ENCODE measurements at regions of chr10 and their contacts with region 1.

Region 1: GRCh38 chr10:69408318-69409175 is 8.2 kb downstream of the TACR2 start:
- DNase-seq: peak; percentile 89 to 91 (median 89)
- H3K4me3 ChIP-seq: peak overlapping the region in 1 of 2 donors; percentile 25
- H3K4me3 Mint-ChIP-seq: peak overlapping the region in 7 of 8 donors; percentile 64 to 82 (median 70)
- H3K27ac ChIP-seq: peak overlapping the region; percentile 61
- H3K27ac Mint-ChIP-seq: peak overlapping the region; percentile 70 to 96 (median 94)
- H3K4me1 ChIP-seq: peaks cover 17% of the 10 kb centered on the region
- H3K4me1 Mint-ChIP-seq: peaks cover 8 to 39% (median 18%) of the 10 kb centered on the region in 4 donors
- H3K27me3 ChIP-seq: no peaks in the 10 kb centered on the region
- H3K27me3 Mint-ChIP-seq: no peaks in the 10 kb centered on the region

Region 2: DNA sequence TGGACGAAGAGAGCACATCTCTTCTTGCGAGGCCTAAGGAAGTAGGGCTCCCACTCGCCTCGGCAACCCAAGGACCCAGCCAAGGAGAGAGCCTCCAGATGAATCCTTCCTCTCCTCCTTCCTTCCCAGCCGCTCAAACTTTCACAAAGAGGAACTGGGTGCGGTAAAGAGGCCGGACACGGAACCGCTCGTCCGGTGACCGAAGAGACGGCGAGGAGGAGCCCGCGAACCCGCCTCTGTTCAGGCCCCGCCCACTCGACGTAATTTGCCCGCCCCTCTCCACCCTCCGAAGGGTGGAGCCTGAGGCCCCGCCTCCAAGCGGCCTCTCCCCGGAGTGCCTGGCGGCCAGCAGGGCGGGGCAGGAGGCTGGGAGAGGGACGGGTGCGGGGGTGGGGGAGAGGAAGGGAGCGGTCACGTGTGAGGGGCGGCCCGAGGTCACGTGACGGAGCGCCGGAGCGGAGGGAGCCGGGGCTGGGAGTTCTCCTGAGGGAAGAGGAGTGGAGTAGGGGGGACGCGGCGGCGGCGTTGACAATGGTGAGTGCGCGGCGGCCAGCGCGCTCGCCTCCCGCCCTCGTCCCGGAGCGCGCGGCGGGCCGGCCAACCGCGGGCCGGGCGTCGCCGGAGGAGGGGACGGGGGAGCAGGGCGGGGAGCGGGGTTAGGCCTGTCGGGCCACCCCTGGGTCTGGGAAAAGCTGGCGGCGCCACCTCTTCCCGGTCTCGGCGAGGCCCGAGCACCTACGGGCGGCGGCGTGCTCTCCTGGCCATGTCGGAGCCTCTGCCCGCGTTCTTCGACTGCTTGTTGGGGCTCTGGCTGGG is 284.6 kb before region 1 on chr10 and contains the start of gene VPS26A:
- CTCF ChIA-PET with region 1: no interaction called
- POLR2A ChIA-PET with region 1: no interaction called
- intact Hi-C with region 1: loop called (anchors 5 kb)
- DNase-seq: peak; percentile 98 to 100 (median 98)
- H3K4me3 ChIP-seq: peak within 1 kb of the TSS; percentile 47 to 81
- H3K4me3 Mint-ChIP-seq: peak within 1 kb of the TSS; percentile 92 to 96 (median 94)
- H3K27ac ChIP-seq: peak within 1 kb of the TSS; percentile 96
- H3K27ac Mint-ChIP-seq: peak within 1 kb of the TSS; percentile 96 to 99 (median 98)
- H3K4me1 ChIP-seq: peaks cover 37% of the 10 kb centered on the region
- H3K4me1 Mint-ChIP-seq: peaks cover 13 to 29% (median 21%) of the 10 kb centered on the region in 4 donors
- H3K27me3 ChIP-seq: no peaks in the 10 kb centered on the region
- H3K27me3 Mint-ChIP-seq: no peaks in the 10 kb centered on the region
- total RNA-seq, gene VPS26A: 31.7 to 35.9 TPM

Region 3: GRCh38 chr10:69237528-69238159 is 170.9 kb before region 1 on chr10:
- CTCF ChIA-PET with region 1: interaction called, 15 read pairs
- POLR2A ChIA-PET with region 1: interaction called, 4 read pairs
- intact Hi-C with region 1: loop called (anchors 1 kb)
- DNase-seq: peak; percentile 78 to 82 (median 79)
- H3K4me3 ChIP-seq: no peak overlapping the region
- H3K4me3 Mint-ChIP-seq: peak overlapping the region in 2 of 8 donors; percentile 7 to 48
- H3K27ac ChIP-seq: no peak overlapping the region
- H3K27ac Mint-ChIP-seq: peak overlapping the region in 3 of 7 donors; percentile 11 to 63 (median 17)
- H3K4me1 ChIP-seq: peaks cover 17% of the 10 kb centered on the region
- H3K4me1 Mint-ChIP-seq: peaks cover 14 to 27% (median 17%) of the 10 kb centered on the region in 4 donors
- H3K27me3 ChIP-seq: no peaks in the 10 kb centered on the region
- H3K27me3 Mint-ChIP-seq: no peaks in the 10 kb centered on the region

Region 4: GRCh38 chr10:69337296-69338132 is 71.0 kb before region 1 on chr10:
- CTCF ChIA-PET with region 1: no interaction called
- POLR2A ChIA-PET with region 1: no interaction called
- intact Hi-C with region 1: no loop called
- DNase-seq: no peak
- H3K4me3 ChIP-seq: no peak overlapping the region
- H3K4me3 Mint-ChIP-seq: peak overlapping the region in 5 of 8 donors; percentile 11 to 57 (median 24)
- H3K27ac ChIP-seq: no peak overlapping the region
- H3K27ac Mint-ChIP-seq: peak overlapping the region in 6 of 7 donors; percentile 42 to 70 (median 58)
- H3K4me1 ChIP-seq: peaks cover 78% of the 10 kb centered on the region
- H3K4me1 Mint-ChIP-seq: peaks cover 47 to 88% (median 71%) of the 10 kb centered on the region in 4 donors
- H3K27me3 ChIP-seq: no peaks in the 10 kb centered on the region
- H3K27me3 Mint-ChIP-seq: no peaks in the 10 kb centered on the region

Region 5: GRCh38 chr10:69377933-69378332 is 30.6 kb before region 1 on chr10:
- CTCF ChIA-PET with region 1: no interaction called
- POLR2A ChIA-PET with region 1: no interaction called
- intact Hi-C with region 1: no loop called
- DNase-seq: no peak
- H3K4me3 ChIP-seq: no peak overlapping the region
- H3K4me3 Mint-ChIP-seq: no peak overlapping the region
- H3K27ac ChIP-seq: no peak overlapping the region
- H3K27ac Mint-ChIP-seq: peak overlapping the region in 6 of 7 donors; percentile 9 to 75 (median 52)
- H3K4me1 ChIP-seq: no peaks in the 10 kb centered on the region
- H3K4me1 Mint-ChIP-seq: peaks cover 0 to 4% (median 1%) of the 10 kb centered on the region in 4 donors
- H3K27me3 ChIP-seq: no peaks in the 10 kb centered on the region
- H3K27me3 Mint-ChIP-seq: no peaks in the 10 kb centered on the region

Region 6: GRCh38 chr10:69397972-69398371 is 10.6 kb before region 1 on chr10:
- CTCF ChIA-PET with region 1: interaction called, 23 read pairs
- POLR2A ChIA-PET with region 1: interaction called, 3 read pairs
- intact Hi-C with region 1: no loop called
- DNase-seq: no peak
- H3K4me3 ChIP-seq: no peak overlapping the region
- H3K4me3 Mint-ChIP-seq: no peak overlapping the region
- H3K27ac ChIP-seq: no peak overlapping the region
- H3K27ac Mint-ChIP-seq: no peak overlapping the region
- H3K4me1 ChIP-seq: no peaks in the 10 kb centered on the region
- H3K4me1 Mint-ChIP-seq: peaks cover 0 to 2% (median 0%) of the 10 kb centered on the region in 4 donors
- H3K27me3 ChIP-seq: no peaks in the 10 kb centered on the region
- H3K27me3 Mint-ChIP-seq: no peaks in the 10 kb centered on the region

Region 7: DNA sequence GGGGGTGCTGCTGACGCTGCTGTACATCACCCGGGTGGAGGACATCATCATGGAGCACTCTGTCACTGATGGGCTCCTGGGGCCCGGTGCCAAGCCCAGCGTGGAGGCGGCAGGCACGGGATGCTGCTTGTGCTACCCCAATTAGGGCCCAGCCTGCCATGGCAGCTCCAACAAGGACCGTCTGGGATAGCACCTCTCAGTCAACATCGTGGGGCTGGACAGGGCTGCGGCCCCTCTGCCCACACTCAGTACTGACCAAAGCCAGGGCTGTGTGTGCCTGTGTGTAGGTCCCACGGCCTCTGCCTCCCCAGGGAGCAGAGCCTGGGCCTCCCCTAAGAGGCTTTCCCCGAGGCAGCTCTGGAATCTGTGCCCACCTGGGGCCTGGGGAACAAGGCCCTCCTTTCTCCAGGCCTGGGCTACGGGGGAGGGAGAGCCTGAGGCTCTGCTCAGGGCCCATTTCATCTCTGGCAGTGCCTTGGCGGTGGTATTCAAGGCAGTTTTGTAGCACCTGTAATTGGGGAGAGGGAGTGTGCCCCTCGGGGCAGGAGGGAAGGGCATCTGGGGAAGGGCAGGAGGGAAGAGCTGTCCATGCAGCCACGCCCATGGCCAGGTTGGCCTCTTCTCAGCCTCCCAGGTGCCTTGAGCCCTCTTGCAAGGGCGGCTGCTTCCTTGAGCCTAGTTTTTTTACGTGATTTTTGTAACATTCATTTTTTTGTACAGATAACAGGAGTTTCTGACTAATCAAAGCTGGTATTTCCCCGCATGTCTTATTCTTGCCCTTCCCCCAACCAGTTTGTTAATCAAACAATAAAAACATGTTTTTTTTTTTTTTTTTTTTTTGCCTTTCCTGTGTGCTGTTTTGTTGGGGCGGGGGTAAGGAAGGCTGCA is 98.5 kb after region 1 on chr10:
- CTCF ChIA-PET with region 1: interaction called, 80 read pairs
- POLR2A ChIA-PET with region 1: interaction called, 33 read pairs
- intact Hi-C with region 1: loop called (anchors 1 kb)
- DNase-seq: peak in 1 of 5 donors; percentile 62
- H3K4me3 ChIP-seq: peak overlapping the region in 1 of 2 donors; percentile 51
- H3K4me3 Mint-ChIP-seq: peak overlapping the region; percentile 68 to 86 (median 78)
- H3K27ac ChIP-seq: peak overlapping the region; percentile 39
- H3K27ac Mint-ChIP-seq: peak overlapping the region; percentile 84 to 98 (median 92)
- H3K4me1 ChIP-seq: peaks cover 20% of the 10 kb centered on the region
- H3K4me1 Mint-ChIP-seq: peaks cover 9 to 20% (median 14%) of the 10 kb centered on the region in 4 donors
- H3K27me3 ChIP-seq: no peaks in the 10 kb centered on the region
- H3K27me3 Mint-ChIP-seq: no peaks in the 10 kb centered on the region

Region 8: GRCh38 chr10:69639291-69640195 is 231.0 kb after region 1 on chr10:
- CTCF ChIA-PET with region 1: interaction called, 20 read pairs
- POLR2A ChIA-PET with region 1: no interaction called
- intact Hi-C with region 1: loop called (anchors 1 kb)
- DNase-seq: peak; percentile 67 to 73 (median 69)
- H3K4me3 ChIP-seq: no peak overlapping the region
- H3K4me3 Mint-ChIP-seq: no peak overlapping the region
- H3K27ac ChIP-seq: no peak overlapping the region
- H3K27ac Mint-ChIP-seq: peak overlapping the region in 1 of 7 donors; percentile 27
- H3K4me1 ChIP-seq: no peaks in the 10 kb centered on the region
- H3K4me1 Mint-ChIP-seq: peaks cover 0 to 4% (median 3%) of the 10 kb centered on the region in 4 donors
- H3K27me3 ChIP-seq: no peaks in the 10 kb centered on the region
- H3K27me3 Mint-ChIP-seq: peaks cover 0 to 2% of the 10 kb centered on the region in 2 donors

Region 9: DNA sequence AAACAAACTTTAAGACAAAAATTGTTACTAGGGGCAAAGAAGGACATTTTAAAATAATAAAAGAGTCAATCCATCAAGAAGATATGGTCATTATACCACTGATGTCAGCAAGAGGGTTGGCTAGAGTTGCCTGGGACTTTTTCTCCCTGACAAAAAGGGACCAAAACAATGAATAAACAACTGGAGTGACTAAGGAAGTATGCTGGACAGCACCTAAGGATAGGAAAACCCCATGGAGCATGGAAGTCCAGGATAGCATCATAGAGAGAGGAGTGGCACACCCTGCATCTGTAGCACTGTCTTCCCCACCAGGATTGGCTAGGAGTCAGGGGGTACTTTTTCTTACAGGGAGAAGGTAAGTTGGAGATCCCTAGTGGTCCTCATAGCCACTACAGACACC is 570.6 kb after region 1 on chr10:
- CTCF ChIA-PET with region 1: no interaction called
- POLR2A ChIA-PET with region 1: no interaction called
- intact Hi-C with region 1: no loop called
- DNase-seq: no peak
- H3K4me3 ChIP-seq: no peak overlapping the region
- H3K4me3 Mint-ChIP-seq: no peak overlapping the region
- H3K27ac ChIP-seq: no peak overlapping the region
- H3K27ac Mint-ChIP-seq: no peak overlapping the region
- H3K4me1 ChIP-seq: no peaks in the 10 kb centered on the region
- H3K4me1 Mint-ChIP-seq: peaks cover 0 to 5% (median 1%) of the 10 kb centered on the region in 4 donors
- H3K27me3 ChIP-seq: no peaks in the 10 kb centered on the region
- H3K27me3 Mint-ChIP-seq: peaks cover 31 to 42% of the 10 kb centered on the region in 2 donors

Measured in CD4-positive, alpha-beta memory T cell (primary cell).